ENCODE measurements at regions of chr1 and their contacts with region 1.

Region 1: GRCh38 chr1:147515046-147515869 is 26.0 kb upstream of the BCL9 start:
- DNase-seq: peak; percentile 36

Region 2: GRCh38 chr1:147640553-147641165 is 125.4 kb after region 1 on chr1:
- in situ Hi-C with region 1: loop called (anchors 25 kb)
- DNase-seq: peak; percentile 75

Region 3: GRCh38 chr1:147890177-147890790 is 375.0 kb after region 1 on chr1:
- in situ Hi-C with region 1: loop called (anchors 25 kb)
- DNase-seq: peak; percentile 63